Esophagus muscularis mucosa (tissue), 4 donors: ENCODE measurements at regions of chrX and their contacts with region 1.

Region 1: DNA sequence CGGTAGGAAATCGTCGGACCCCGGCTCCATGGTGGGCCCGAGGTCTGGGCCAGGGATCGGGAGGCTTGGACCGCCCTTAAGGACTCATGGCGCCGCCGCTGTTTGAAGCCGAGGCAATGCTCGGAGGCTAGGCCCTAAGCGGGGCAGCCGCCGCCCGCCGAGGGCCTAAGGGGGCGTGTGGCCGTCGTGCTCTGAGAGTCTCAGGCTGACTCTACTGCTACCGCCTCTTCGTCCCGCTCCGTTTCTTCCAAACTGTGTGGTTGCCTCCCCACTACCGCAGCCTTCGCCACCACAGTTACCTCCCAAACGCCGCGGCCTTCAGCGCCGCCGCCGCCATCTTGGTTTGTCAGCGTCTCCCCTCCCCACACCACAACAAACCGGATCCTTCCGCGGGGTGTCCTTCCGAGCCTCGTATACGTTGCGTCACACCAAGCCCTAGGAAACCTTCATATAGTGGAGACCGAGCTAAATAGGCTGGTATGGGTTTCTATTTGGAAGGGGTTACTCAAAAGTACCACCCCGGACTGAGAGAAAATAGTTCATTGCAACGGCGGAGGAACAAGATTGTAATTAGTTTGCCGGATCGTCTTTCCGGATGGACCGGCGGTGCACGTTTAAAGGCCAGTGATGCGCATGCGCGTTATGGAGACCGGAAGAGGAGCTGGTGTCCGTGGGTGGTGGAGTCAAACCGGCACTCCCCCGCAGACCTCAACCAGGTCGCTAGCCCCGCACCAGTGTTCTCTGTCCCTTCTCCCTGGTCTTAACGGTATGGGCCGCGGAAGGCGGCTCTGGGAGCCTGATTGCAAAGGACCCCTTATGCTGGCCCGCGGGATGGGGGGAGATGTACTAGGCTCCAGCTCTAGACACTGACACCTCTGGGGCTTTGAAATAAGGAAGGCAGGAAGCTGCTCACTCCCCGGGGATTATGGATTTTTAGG is at the start of gene KDM5C:
- DNase-seq: peak; percentile 94
- H3K4me3 ChIP-seq: peak within 1 kb of the TSS; percentile 75 to 96 (median 81)
- H3K27ac ChIP-seq: peak within 1 kb of the TSS; percentile 83 to 91 (median 86)
- H3K4me1 ChIP-seq: peaks cover 26 to 49% (median 34%) of the 10 kb centered on the region in 4 donors
- H3K27me3 ChIP-seq: no peaks in the 10 kb centered on the region
- CTCF ChIP-seq: no peak
- EP300 ChIP-seq: no peak
- POLR2A ChIP-seq: peak; percentile 38
- total RNA-seq, gene KDM5C: 64.8 to 128 (median 85.2) TPM

Region 2: GRCh38 chrX:52995135-52996020 is 229.8 kb before region 1 on chrX:
- intact Hi-C with region 1: no loop called
- DNase-seq: peak; percentile 98
- H3K4me3 ChIP-seq: peak overlapping the region; percentile 54 to 68 (median 58)
- H3K27ac ChIP-seq: peak overlapping the region; percentile 81 to 87 (median 84)
- H3K4me1 ChIP-seq: peaks cover 9 to 20% (median 18%) of the 10 kb centered on the region in 4 donors
- H3K27me3 ChIP-seq: peaks cover 0 to 2% (median 0%) of the 10 kb centered on the region in 4 donors
- CTCF ChIP-seq: peak; percentile 52 to 76 (median 69)
- EP300 ChIP-seq: no peak
- POLR2A ChIP-seq: no peak

Region 3: DNA sequence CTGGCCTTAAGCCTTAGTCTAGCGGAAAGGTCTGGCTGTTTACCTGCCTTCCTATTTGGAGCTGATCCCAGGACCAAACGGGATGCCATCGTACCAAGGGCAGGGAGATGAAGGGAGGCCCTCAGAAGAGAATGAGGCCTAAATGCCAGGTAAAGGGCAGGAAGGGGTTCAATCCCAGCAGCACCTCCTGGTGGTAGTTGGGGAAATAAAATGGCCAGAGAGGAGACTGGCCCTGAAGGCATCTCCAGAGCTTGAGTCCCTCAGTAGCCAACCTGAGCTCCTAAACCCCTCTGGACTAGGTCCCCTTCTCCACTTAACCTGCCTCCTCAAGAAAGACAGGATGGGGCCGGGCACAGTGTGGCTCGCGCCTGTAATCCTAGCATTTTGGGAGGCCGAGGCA is 53.8 kb before region 1 on chrX:
- intact Hi-C with region 1: no loop called
- DNase-seq: no peak
- H3K4me3 ChIP-seq: no peak overlapping the region
- H3K27ac ChIP-seq: no peak overlapping the region
- H3K4me1 ChIP-seq: no peaks in the 10 kb centered on the region
- H3K27me3 ChIP-seq: no peaks in the 10 kb centered on the region
- CTCF ChIP-seq: no peak
- EP300 ChIP-seq: no peak
- POLR2A ChIP-seq: no peak

Region 4: DNA sequence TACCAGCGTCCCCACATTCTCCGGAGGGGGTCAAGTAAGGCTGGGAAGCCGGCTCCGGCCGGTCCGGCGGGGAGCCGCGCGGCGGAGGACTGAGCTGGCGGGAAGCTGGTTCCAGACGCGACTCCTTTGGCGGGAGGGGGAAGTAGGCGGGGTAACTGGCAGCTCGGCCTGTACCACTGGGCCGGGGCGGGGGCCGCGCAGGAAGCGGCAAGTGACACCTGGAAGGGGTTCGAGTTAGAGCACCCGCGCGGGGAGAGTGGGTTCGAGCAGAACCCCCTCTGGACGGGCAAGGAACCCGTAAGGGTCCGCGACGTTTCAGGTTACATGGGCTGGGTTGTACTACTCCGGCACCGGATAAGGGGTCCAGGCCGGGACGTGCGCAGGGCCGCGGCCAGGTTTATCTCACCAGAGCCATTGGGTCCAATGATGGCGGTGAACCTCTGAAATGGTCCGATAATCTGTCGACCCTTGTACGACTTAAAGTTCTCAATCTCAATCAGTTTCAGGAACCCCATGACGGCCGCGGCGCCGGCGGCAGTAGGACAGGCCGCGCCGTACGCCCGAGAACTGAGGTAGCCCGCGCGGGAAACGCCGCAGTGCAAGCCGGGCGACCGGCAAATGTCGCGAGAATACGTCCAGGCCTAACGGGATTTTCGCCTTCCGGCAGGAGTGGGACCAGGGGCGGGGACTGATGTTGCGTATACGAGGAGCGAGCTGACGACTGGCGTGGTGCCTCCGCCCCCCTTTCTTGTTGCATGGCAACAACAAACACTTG is 197.1 kb after region 1 on chrX and contains the start of gene SMC1A:
- intact Hi-C with region 1: loop called (anchors 10 kb)
- DNase-seq: peak; percentile 96
- H3K4me3 ChIP-seq: peak within 1 kb of the TSS; percentile 62 to 94 (median 68)
- H3K27ac ChIP-seq: peak within 1 kb of the TSS; percentile 87 to 94 (median 90)
- H3K4me1 ChIP-seq: peaks cover 15 to 28% (median 24%) of the 10 kb centered on the region in 4 donors
- H3K27me3 ChIP-seq: no peaks in the 10 kb centered on the region
- CTCF ChIP-seq: no peak
- EP300 ChIP-seq: no peak
- POLR2A ChIP-seq: peak; percentile 6
- total RNA-seq, gene SMC1A: 32.8 to 52.0 (median 36.5) TPM